Activated CD8-positive, alpha-beta T cell treated with anti-CD3 and anti-CD28 coated beads for 36 hours (primary cell): ENCODE measurements at regions of chr11 and their contacts with region 1.

Region 1: DNA sequence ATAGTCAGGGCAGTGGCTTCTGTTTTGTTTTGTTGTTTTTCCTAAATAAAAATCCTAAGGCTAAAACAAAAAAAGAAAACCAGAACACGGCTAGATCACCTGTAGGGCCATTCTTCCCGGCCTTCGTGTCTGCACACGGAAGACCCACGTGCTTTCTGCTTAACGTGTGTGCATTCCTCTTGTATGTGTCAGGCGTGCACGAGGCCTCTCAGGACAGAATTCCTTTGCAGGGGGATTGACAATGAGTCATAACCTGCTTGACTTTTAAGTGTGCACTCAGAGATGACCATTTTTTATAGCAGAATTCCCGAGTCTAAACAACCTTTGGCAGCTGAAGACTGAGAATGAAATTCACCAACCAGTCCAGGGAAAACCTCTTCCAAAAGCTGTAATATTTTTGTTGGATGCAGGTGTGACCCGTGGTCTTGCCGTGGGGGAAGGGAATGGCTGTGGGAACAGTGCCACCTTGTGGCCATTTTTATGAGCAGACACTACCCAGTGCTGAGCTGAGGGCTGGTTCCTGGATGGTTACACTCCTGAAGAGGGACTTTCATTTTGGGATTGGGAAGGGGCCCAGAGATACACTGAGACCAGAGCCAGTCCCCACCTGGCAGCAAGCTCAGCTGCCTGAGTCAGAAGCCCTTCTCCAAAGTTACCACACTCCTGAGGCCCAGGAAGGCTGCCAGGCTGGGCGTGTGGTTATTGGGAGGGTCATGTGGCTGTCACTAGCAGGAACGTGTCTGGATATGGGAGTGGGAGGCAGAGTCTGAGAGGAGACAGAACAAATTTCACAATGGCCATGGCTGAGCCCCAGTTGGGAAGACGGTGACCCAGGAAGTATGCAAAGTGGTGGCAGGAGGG is 35.8 kb upstream of the DKK3 start:
- DNase-seq: peak; percentile 74
- ATAC-seq: peak; percentile 81
- H3K4me3 Mint-ChIP-seq: no peak overlapping the region
- H3K27ac Mint-ChIP-seq: no peak overlapping the region
- H3K4me1 Mint-ChIP-seq: peaks cover 4% of the 10 kb centered on the region
- H3K27me3 Mint-ChIP-seq: peaks cover 2% of the 10 kb centered on the region
- CTCF ChIP-seq: peak; percentile 94

Region 2: GRCh38 chr11:11757909-11758308 is 286.3 kb before region 1 on chr11:
- CTCF ChIA-PET with region 1: no interaction called
- POLR2A ChIA-PET with region 1: no interaction called
- intact Hi-C with region 1: no loop called
- DNase-seq: no peak
- ATAC-seq: no peak
- H3K4me3 Mint-ChIP-seq: no peak overlapping the region
- H3K27ac Mint-ChIP-seq: no peak overlapping the region
- H3K4me1 Mint-ChIP-seq: no peaks in the 10 kb centered on the region
- H3K27me3 Mint-ChIP-seq: peaks cover 9% of the 10 kb centered on the region
- CTCF ChIP-seq: no peak

Region 3: DNA sequence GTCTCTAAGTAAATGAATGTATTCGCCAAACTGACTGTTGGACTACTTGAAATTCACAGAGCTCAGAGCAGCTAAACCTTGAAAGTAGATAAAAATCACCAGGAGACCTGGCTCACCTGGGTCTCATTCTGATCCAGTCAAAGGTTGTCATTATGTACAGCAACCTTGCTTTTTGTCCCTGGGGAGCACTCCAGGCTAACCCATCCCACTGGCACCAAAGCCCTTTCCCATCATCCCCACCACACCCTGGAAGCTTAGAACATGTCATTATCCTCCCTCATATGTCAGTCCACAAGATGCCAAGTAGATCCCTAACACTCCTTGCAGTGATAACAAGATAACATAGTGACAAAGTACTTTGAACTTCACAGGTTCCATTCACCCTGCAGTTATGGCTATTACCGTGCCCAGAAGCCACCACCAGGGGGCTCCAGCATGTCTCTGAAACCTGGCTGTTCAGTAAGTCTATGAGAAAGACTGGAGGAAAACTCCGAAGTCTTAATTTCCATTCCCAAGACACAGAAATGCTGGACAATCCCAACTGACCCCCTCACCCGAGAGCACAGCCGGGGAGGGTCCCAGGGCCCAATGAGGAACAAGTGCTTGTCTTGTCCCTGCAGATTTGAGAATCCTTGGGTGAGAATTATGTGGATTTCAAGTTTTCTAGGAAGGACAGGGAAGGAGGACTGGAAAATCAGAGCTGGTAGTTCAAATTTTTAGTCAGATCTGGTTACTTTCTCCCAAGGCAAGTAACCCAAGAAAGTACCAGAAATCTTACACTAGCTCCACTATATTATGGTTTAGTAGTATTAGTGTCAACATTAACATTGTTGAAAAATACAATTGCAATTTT is 245.4 kb before region 1 on chr11:
- CTCF ChIA-PET with region 1: interaction called, 7 read pairs
- POLR2A ChIA-PET with region 1: no interaction called
- intact Hi-C with region 1: loop called (anchors 2 kb)
- DNase-seq: peak; percentile 90
- ATAC-seq: peak; percentile 82
- H3K4me3 Mint-ChIP-seq: no peak overlapping the region
- H3K27ac Mint-ChIP-seq: no peak overlapping the region
- H3K4me1 Mint-ChIP-seq: no peaks in the 10 kb centered on the region
- H3K27me3 Mint-ChIP-seq: peaks cover 19% of the 10 kb centered on the region
- CTCF ChIP-seq: peak; percentile 83

Region 4: GRCh38 chr11:12066799-12067508 is 22.8 kb after region 1 on chr11:
- CTCF ChIA-PET with region 1: interaction called, 17 read pairs
- POLR2A ChIA-PET with region 1: no interaction called
- intact Hi-C with region 1: no loop called
- DNase-seq: no peak
- ATAC-seq: no peak
- H3K4me3 Mint-ChIP-seq: no peak overlapping the region
- H3K27ac Mint-ChIP-seq: no peak overlapping the region
- H3K4me1 Mint-ChIP-seq: peaks cover 3% of the 10 kb centered on the region
- H3K27me3 Mint-ChIP-seq: no peaks in the 10 kb centered on the region
- CTCF ChIP-seq: no peak

Region 5: GRCh38 chr11:12114193-12115033 is 70.2 kb after region 1 on chr11:
- CTCF ChIA-PET with region 1: no interaction called
- POLR2A ChIA-PET with region 1: no interaction called
- intact Hi-C with region 1: no loop called
- DNase-seq: no peak
- ATAC-seq: no peak
- H3K4me3 Mint-ChIP-seq: no peak overlapping the region
- H3K27ac Mint-ChIP-seq: no peak overlapping the region
- H3K4me1 Mint-ChIP-seq: peaks cover 37% of the 10 kb centered on the region
- H3K27me3 Mint-ChIP-seq: no peaks in the 10 kb centered on the region
- CTCF ChIP-seq: no peak

Region 6: GRCh38 chr11:12200279-12201010 is 156.3 kb after region 1 on chr11:
- CTCF ChIA-PET with region 1: interaction called, 10 read pairs
- POLR2A ChIA-PET with region 1: no interaction called
- intact Hi-C with region 1: no loop called
- DNase-seq: peak; percentile 39
- ATAC-seq: no peak
- H3K4me3 Mint-ChIP-seq: no peak overlapping the region
- H3K27ac Mint-ChIP-seq: peak overlapping the region; percentile 44
- H3K4me1 Mint-ChIP-seq: peaks cover 80% of the 10 kb centered on the region
- H3K27me3 Mint-ChIP-seq: no peaks in the 10 kb centered on the region
- CTCF ChIP-seq: no peak

Region 7: GRCh38 chr11:12288212-12288930 is 244.2 kb after region 1 on chr11:
- CTCF ChIA-PET with region 1: interaction called, 167 read pairs
- POLR2A ChIA-PET with region 1: interaction called, 3 read pairs
- intact Hi-C with region 1: no loop called
- DNase-seq: peak; percentile 69
- ATAC-seq: peak; percentile 58
- H3K4me3 Mint-ChIP-seq: no peak overlapping the region
- H3K27ac Mint-ChIP-seq: no peak overlapping the region
- H3K4me1 Mint-ChIP-seq: peaks cover 4% of the 10 kb centered on the region
- H3K27me3 Mint-ChIP-seq: no peaks in the 10 kb centered on the region
- CTCF ChIP-seq: peak; percentile 90